ENCODE measurements at regions of chr1 and their contacts with region 1.

Region 1: DNA sequence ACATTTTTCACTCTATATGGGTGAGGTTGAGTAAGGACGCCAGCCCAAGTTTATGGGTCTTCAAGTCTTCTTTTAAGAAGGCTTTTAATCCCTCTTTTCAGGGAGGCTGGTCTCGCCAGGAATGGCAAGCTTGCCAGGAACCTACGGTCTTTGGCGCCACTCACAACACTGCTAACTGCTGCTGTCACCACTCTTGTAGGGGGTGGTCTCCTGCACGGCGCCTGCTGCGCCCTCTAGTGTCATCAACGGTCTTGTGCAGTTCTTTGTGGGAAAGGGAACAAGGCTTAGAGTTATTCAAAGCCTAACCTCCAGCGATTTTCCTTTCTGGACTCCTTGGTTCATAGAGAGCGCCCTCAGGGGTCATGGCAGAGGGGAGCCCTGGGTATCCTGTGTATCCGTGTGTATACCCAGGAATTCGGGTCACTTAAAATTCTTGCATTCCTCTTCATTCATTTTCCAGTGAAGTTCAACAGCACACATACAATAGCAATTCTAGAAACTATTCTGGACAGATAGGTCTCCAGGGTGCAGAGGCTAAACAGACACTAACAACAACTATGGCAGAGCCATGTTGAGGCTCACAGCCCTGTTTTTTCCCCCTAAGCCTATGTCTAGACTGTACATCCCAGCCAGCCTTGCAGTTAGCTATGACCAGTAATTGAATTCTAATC is 392.8 kb upstream of the CAMK1G start:
- DNase-seq: no peak

Region 2: DNA sequence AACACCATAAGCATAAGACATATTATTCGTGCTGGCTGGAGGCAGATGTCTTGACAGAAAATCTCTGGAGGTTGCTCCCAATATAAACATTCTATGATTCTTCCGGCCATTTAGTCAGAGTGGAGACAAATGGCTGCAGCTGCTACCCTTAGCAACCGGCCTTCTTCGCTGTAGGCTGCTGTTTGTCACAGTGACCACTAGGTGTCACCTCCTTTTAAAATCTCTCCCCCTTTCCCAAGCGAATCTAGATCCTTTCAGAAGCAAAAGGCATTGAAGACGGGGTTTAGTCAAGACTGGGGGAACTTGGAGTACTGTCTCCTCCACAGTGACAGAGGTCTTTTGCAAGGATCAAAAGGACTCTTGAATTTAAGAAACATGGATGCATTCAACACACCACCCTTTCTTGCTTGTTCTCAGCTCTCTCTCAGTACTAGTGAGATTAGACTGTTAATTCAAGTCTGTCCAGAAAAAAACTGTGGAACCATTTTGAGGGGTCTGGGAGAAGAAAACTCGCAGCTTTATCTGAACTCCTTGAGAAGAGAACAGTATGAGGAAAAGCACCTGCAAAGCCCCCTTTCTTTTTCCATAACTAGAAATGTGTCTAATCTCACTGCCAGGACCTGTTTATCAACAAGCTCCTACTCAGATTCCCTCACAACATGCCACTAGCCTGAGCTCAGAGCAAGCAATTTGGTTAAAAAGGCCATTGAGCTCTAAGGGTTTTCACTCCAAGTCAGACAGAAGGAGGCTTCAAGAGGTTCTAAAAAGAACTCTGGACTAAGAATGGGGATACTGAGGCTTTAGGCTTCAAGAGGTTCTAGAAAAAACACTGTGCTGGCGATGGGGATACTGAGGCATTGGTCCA is 538.2 kb before region 1 on chr1:
- intact Hi-C with region 1: loop called (anchors 5 kb)
- DNase-seq: no peak

Region 3: GRCh38 chr1:209248649-209249279 is 58.0 kb after region 1 on chr1:
- intact Hi-C with region 1: no loop called
- DNase-seq: no peak